ENCODE measurements at regions of chr13 and their contacts with region 1.

Region 1: GRCh38 chr13:29513397-29514322 is 81.8 kb downstream of the SLC7A1 start:
- DNase-seq: no peak
- H3K4me3 ChIP-seq: no peak overlapping the region
- H3K27ac ChIP-seq: no peak overlapping the region
- H3K4me1 ChIP-seq: peaks cover 0 to under 1% (median 0%) of the 10 kb centered on the region in 4 donors
- H3K27me3 ChIP-seq: no peaks in the 10 kb centered on the region
- CTCF ChIP-seq: no peak
- EP300 ChIP-seq: no peak
- POLR2A ChIP-seq: no peak

Region 2: DNA sequence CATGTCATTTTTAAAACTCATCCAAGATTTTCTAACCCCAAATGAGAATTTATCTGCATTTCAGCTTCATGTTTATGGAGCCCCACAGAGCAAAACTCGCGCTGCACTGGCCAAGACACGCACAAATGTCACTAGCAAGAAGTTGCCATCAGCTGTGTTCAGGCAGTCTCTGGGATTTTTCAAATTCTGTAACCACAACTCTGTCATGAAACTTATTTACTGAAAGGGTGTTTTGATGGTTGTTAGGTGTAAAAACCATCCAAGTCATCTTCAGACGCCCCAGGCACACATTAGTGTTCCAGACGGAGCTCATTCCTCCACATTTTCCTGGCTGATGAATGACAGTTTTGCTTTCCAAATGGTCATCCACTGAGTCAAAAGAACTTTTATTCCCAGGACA is 18.5 kb after region 1 on chr13:
- in situ Hi-C with region 1: no loop called
- intact Hi-C with region 1: no loop called
- DNase-seq: no peak
- H3K4me3 ChIP-seq: no peak overlapping the region
- H3K27ac ChIP-seq: no peak overlapping the region
- H3K4me1 ChIP-seq: peaks cover 0 to 4% (median 0%) of the 10 kb centered on the region in 4 donors
- H3K27me3 ChIP-seq: no peaks in the 10 kb centered on the region
- CTCF ChIP-seq: no peak
- EP300 ChIP-seq: no peak
- POLR2A ChIP-seq: no peak

Region 3: DNA sequence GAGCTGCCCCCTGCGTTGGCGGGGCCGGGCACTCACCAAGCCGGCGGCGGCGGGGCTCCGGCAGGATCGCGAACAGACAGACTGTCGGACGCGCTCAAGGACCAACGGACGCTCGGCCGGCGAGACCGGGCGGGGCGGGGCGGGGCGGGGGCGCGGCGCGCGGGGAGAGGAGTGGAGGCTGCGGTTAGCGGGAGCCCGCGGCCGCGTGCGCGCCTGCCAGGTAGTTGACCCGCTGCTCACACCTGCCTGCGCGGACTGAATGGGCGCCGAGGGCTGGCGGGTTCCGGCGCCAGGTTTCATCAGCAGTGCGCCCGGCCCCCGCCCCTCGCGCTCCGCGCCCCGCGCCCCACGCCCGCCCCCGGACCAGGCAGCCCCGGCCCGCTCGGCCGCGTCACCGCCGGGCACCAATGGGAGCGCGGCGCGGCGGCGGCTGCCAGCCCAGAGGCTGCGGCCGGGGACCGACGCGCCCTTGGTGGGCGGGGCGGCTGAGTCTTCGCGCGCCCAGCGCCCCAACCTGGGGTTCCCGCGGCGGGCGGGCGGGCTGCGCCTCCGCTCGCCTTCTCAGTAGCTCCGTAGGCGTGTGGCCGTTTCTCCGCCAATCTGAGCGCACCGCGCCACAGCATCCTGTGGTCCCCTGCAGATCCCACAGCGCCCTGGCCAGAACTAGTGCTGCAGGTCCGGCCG is 81.9 kb after region 1 on chr13 and contains the start of gene SLC7A1:
- in situ Hi-C with region 1: no loop called
- intact Hi-C with region 1: loop called (anchors 10 kb)
- DNase-seq: peak; percentile 85
- H3K4me3 ChIP-seq: peak within 1 kb of the TSS; percentile 83 to 98 (median 94)
- H3K27ac ChIP-seq: peak within 1 kb of the TSS; percentile 91 to 97 (median 95)
- H3K4me1 ChIP-seq: peaks cover 3 to 19% (median 11%) of the 10 kb centered on the region in 4 donors
- H3K27me3 ChIP-seq: no peaks in the 10 kb centered on the region
- CTCF ChIP-seq: no peak
- EP300 ChIP-seq: no peak
- POLR2A ChIP-seq: no peak
- total RNA-seq, gene SLC7A1: 10.8 to 21.4 (median 17.9) TPM

Region 4: DNA sequence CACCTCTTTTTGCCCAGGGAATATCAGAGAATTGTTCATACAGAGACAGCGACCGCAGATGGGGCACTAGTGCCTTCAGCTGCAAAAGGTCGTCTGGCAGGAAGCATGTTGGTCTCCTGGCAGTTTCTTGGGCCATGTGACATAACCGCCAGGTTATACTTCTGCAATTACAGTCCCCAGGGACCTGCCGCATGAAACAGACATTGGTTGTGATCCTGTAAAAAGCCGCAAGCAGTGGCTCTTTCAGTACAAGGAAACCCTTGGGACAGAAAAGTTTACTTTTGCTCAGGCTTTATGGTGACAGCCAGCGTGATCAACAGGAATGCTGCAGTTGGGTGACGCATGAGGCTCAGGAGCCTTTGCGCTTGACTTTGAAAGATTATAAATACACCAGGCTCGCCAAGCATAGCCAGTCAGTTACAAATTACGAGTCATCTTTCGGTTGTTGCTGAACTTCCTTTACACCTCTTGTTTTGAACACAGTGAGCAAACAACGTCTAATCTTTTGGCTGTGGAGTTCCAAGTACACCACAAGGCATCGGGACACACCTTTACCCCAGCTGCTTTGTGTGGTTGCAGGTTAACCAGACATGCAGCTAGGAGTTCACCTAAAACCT is 858.1 kb after region 1 on chr13:
- in situ Hi-C with region 1: no loop called
- intact Hi-C with region 1: no loop called
- DNase-seq: peak; percentile 75
- H3K4me3 ChIP-seq: peak overlapping the region in 1 of 4 donors; percentile 25
- H3K27ac ChIP-seq: peak overlapping the region; percentile 79 to 86 (median 80)
- H3K4me1 ChIP-seq: peaks cover 0 to 34% (median 10%) of the 10 kb centered on the region in 4 donors
- H3K27me3 ChIP-seq: no peaks in the 10 kb centered on the region
- CTCF ChIP-seq: no peak
- EP300 ChIP-seq: peak; percentile 2
- POLR2A ChIP-seq: peak; percentile 52

Region 5: DNA sequence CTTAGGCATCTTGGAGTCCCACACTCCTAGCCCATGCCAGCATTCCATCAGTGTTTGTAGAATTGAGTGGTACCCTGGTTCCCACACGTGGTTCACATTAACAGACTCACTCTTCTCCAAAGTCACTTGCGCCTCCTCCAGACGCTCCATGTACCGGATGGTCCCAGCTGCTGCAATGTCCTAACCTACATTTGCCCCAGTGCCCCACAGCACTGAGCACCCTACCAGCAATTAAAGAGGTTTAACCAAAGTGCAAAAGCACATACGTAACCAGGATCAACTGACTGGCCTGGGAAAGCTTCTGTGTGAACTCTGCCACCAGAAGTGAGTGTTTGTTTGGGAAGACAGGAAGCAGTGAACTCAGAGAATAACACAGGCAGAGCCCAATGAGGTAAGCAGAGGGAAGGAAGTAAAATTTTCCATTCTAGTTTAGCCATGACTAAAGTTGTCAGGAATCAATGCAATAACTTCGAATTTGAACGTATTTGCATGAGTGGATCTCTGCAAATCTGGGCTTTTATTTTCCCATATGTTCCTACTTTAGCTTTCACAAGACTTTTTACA is 1385.1 kb after region 1 on chr13:
- in situ Hi-C with region 1: no loop called
- intact Hi-C with region 1: loop called (anchors 5 kb)
- DNase-seq: no peak
- H3K4me3 ChIP-seq: no peak overlapping the region
- H3K27ac ChIP-seq: peak overlapping the region; percentile 4 to 27 (median 8)
- H3K4me1 ChIP-seq: no peaks in the 10 kb centered on the region
- H3K27me3 ChIP-seq: peaks cover 3% of the 10 kb centered on the region
- CTCF ChIP-seq: no peak
- EP300 ChIP-seq: no peak
- POLR2A ChIP-seq: no peak